GM10248 (cell line): ENCODE measurements at regions of chr9 and their contacts with region 1.

Region 1: GRCh38 chr9:98202252-98202651 is 9.8 kb upstream of the CORO2A start:
- DNase-seq: no peak
- CTCF ChIP-seq: no peak

Region 2: DNA sequence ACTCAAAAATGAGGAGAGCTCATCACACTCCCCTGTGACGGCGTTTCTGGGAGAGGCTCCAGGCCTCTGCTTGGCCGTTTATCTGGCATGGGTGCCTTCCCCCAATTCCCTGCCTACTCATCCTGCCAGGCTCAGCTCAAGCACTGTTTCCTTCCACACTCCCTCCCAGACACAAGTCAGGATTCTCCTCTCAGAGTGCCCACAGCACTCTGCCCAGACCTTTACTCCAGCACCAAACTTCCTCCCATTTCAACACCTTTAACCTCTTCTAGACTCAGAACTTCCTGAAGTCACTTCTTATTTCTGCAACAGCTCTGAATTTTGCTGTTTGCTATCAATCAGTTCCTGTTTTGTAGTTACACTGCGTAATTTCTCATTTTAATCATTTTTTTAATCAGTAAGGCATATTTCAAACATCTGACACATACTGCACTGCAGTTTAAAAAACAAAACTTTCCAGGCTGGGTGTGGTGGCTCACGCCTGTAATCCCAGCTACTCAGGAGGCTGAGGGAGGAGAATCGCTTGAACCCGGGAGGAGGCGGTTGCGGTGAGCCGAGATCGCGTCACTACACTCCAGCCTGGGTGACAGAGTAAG is 295.9 kb before region 1 on chr9:
- CTCF ChIA-PET with region 1: no interaction called
- POLR2A ChIA-PET with region 1: no interaction called
- DNase-seq: no peak
- CTCF ChIP-seq: no peak

Region 3: DNA sequence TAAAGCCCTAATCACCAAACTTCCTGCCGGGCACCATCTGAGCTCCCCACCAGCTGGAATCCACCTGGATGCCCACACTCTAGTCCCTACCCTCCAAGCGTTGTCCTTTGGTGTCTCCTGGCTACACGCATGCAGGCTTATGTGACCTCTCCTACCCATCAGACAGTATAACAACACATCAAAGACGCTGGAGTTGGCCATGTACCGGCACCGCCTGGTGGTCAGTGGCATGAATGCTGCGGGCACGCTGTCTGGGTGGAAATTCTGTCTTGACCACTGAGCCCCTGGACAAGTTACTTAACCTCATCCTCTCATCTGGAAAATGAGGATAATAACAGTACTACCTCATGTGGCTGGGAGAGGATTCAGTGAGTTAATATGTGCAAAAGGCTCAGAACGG is 13.6 kb after region 1 on chr9:
- CTCF ChIA-PET with region 1: interaction called, 25 read pairs
- POLR2A ChIA-PET with region 1: no interaction called
- DNase-seq: no peak
- CTCF ChIP-seq: peak; percentile 8

Region 4: GRCh38 chr9:98234245-98234825 is 32.1 kb after region 1 on chr9:
- CTCF ChIA-PET with region 1: interaction called, 18 read pairs
- POLR2A ChIA-PET with region 1: no interaction called
- DNase-seq: no peak
- CTCF ChIP-seq: peak; percentile 16